ENCODE measurements at regions of chr1 and their contacts with region 1.

Region 1: DNA sequence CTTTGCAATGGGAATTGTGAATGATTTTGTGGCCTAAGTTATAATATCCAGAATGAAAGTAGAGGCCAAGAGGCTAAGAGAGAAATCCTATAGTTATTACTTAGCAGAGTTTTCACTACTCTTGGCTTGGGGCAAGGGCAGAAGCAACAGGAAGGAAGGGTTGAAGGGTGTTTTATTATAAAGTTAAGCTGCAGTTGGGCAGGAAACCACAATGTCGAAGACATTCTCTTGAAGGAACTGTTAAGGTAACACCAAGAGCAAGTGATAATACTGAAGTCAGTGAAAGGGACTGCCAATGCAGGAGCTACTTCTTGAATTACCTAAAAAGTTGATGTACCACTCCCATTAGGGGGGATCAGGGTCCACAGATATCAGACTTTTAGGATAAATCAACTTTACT is 8.3 kb downstream of the XCL2 start:
- DNase-seq: peak; percentile 47 to 63 (median 57)
- H3K4me3 ChIP-seq: peak overlapping the region in 1 of 2 donors; percentile 16
- H3K4me3 Mint-ChIP-seq: peak overlapping the region; percentile 34 to 84 (median 72)
- H3K27ac ChIP-seq: no peak overlapping the region
- H3K27ac Mint-ChIP-seq: peak overlapping the region; percentile 45 to 93 (median 78)
- H3K4me1 ChIP-seq: peaks cover 66% of the 10 kb centered on the region
- H3K4me1 Mint-ChIP-seq: peaks cover 53 to 87% (median 69%) of the 10 kb centered on the region in 4 donors
- H3K27me3 ChIP-seq: no peaks in the 10 kb centered on the region
- H3K27me3 Mint-ChIP-seq: no peaks in the 10 kb centered on the region

Region 2: GRCh38 chr1:168466092-168466713 is 69.3 kb before region 1 on chr1:
- CTCF ChIA-PET with region 1: interaction called, 4 read pairs
- POLR2A ChIA-PET with region 1: interaction called, 20 read pairs
- intact Hi-C with region 1: loop called (anchors 5 kb)
- DNase-seq: peak in 2 of 5 donors; percentile 16 to 41
- H3K4me3 ChIP-seq: peak overlapping the region in 1 of 2 donors; percentile 9
- H3K4me3 Mint-ChIP-seq: peak overlapping the region in 6 of 8 donors; percentile 47 to 88 (median 66)
- H3K27ac ChIP-seq: no peak overlapping the region
- H3K27ac Mint-ChIP-seq: peak overlapping the region; percentile 83 to 88 (median 85)
- H3K4me1 ChIP-seq: peaks cover 57% of the 10 kb centered on the region
- H3K4me1 Mint-ChIP-seq: peaks cover 54 to 67% (median 60%) of the 10 kb centered on the region in 4 donors
- H3K27me3 ChIP-seq: no peaks in the 10 kb centered on the region
- H3K27me3 Mint-ChIP-seq: no peaks in the 10 kb centered on the region

Region 3: DNA sequence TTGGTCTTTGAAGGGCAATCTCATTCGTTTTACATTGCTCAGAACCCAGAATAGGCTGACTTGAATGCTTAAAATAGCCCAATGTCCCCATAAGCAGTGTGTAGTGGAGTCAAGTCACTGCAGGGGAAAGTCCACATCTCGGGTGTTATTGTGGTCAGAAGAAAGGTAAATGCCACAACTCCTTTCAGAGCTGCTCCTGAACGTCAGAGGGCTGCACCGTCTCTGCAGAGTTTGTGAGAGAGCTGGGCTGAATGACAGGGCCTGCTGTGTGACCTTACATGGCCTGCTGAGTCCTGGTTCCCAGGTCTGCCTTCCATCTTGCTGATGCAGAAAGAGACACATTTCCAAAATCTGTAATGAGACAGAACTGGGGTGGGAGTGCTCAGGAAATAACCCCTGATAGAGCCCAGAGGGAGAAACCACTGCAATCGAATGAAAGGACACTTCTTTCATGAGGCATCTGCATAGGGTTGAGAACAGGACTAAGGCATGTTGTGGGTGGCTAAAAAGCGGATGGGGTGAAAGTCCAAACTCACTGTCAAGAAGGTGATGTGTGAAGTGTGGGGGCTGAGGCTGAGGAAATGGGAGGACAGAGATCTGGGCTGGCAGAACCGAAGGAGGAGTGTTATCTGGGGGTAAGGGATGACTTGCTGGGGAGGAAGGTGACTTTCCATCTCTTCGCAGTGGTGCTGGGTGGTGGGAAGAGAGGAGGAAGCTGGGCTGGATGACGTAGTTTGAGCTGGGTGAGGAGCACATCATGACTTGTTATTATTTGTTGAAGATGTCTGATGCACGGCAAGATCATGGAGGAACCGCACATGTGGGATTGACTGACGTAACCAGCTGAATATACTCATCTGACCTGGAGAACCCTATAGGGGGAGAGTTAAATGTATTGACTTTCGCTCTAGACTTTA is 25.4 kb before region 1 on chr1:
- CTCF ChIA-PET with region 1: interaction called, 5 read pairs
- POLR2A ChIA-PET with region 1: interaction called, 11 read pairs
- intact Hi-C with region 1: loop called (anchors 2 kb)
- DNase-seq: peak in 1 of 5 donors; percentile 43
- H3K4me3 ChIP-seq: no peak overlapping the region
- H3K4me3 Mint-ChIP-seq: peak overlapping the region in 2 of 8 donors; percentile 17 to 53
- H3K27ac ChIP-seq: no peak overlapping the region
- H3K27ac Mint-ChIP-seq: peak overlapping the region in 3 of 7 donors; percentile 45 to 76 (median 68)
- H3K4me1 ChIP-seq: peaks cover 31% of the 10 kb centered on the region
- H3K4me1 Mint-ChIP-seq: peaks cover 33 to 56% (median 44%) of the 10 kb centered on the region in 4 donors
- H3K27me3 ChIP-seq: no peaks in the 10 kb centered on the region
- H3K27me3 Mint-ChIP-seq: no peaks in the 10 kb centered on the region

Region 4: GRCh38 chr1:168520052-168520751 is 15.3 kb before region 1 on chr1:
- CTCF ChIA-PET with region 1: interaction called, 5 read pairs
- POLR2A ChIA-PET with region 1: interaction called, 40 read pairs
- intact Hi-C with region 1: loop called (anchors 1 kb)
- DNase-seq: peak in 3 of 5 donors; percentile 14 to 43 (median 32)
- H3K4me3 ChIP-seq: no peak overlapping the region
- H3K4me3 Mint-ChIP-seq: peak overlapping the region; percentile 11 to 78 (median 66)
- H3K27ac ChIP-seq: peak overlapping the region; percentile 20
- H3K27ac Mint-ChIP-seq: peak overlapping the region; percentile 76 to 95 (median 86)
- H3K4me1 ChIP-seq: peaks cover 63% of the 10 kb centered on the region
- H3K4me1 Mint-ChIP-seq: peaks cover 42 to 63% (median 56%) of the 10 kb centered on the region in 4 donors
- H3K27me3 ChIP-seq: no peaks in the 10 kb centered on the region
- H3K27me3 Mint-ChIP-seq: no peaks in the 10 kb centered on the region

Region 5: DNA sequence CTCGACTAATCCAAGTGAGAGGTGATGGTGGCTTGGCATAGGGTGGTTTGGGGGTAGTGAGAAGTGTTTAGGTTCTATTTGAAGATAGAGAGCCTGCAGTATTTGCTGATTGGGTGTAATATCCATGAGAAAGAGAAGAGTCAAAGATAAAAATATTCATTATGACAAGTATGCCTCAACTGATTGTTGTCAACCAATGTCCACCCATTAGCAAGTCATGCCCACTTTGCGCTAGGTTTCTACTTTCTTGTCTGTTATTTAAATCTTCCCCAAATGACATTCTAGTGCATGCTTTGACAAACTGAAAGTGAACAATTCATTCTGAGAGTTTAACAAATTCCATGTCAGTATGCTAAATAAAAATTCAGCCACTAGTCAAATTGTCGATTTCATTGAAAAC is 37.1 kb after region 1 on chr1:
- CTCF ChIA-PET with region 1: no interaction called
- POLR2A ChIA-PET with region 1: interaction called, 3 read pairs
- intact Hi-C with region 1: loop called (anchors 5 kb)
- DNase-seq: no peak
- H3K4me3 ChIP-seq: no peak overlapping the region
- H3K4me3 Mint-ChIP-seq: no peak overlapping the region
- H3K27ac ChIP-seq: no peak overlapping the region
- H3K27ac Mint-ChIP-seq: no peak overlapping the region
- H3K4me1 ChIP-seq: no peaks in the 10 kb centered on the region
- H3K4me1 Mint-ChIP-seq: peaks cover 8 to 17% (median 14%) of the 10 kb centered on the region in 4 donors
- H3K27me3 ChIP-seq: no peaks in the 10 kb centered on the region
- H3K27me3 Mint-ChIP-seq: peaks cover 0 to 2% of the 10 kb centered on the region in 2 donors

Measured in CD4-positive, alpha-beta memory T cell (primary cell).